ENCODE measurements at regions of chr1 and their contacts with region 1.

Region 1: DNA sequence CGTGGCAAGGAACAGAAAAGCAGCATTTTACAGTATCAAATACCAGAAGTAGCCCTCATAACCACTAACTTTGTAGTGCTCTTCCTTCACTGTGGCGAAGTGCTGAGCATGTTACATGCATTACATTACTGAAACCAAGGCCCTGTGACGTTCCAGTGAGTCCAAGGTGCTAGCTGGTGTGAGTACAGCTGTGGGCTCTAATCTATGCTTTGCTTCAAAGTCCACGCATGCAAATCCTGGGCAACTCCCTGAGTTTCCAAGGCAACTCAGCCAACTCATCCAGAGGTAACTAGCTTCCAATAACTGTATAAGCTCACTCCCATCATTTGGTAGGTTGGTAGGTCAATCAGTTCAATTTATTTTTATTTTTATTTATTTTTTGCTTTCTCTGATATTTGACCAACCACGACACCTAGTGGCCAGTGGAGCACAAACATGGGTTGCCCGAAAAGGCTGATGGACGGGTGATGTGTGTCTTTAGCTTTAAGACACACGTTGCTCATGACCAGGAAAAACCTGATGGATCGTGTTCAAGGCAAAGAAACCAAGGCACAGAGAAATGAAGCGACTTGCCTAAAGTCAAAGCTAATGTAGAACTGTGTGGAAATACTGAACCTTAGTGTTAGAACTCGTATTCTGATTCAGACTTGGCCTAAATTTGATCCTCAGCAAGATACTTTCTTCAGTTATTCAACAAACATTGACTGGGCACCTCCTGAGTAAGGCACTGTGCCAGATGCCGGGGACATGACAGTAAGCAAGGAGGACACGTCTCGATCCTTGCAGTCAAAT is 73.0 kb downstream of the GNG12 start:
- DNase-seq: peak; percentile 17 to 72 (median 59)
- ATAC-seq: peak; percentile 56
- H3K4me3 ChIP-seq: no peak overlapping the region
- H3K4me3 Mint-ChIP-seq: no peak overlapping the region
- H3K27ac ChIP-seq: no peak overlapping the region
- H3K27ac Mint-ChIP-seq: no peak overlapping the region
- H3K4me1 ChIP-seq: no peaks in the 10 kb centered on the region
- H3K4me1 Mint-ChIP-seq: no peaks in the 10 kb centered on the region
- H3K27me3 ChIP-seq: peaks cover 0 to 3% of the 10 kb centered on the region in 2 experiments
- H3K27me3 Mint-ChIP-seq: peaks cover 19% of the 10 kb centered on the region
- CTCF ChIP-seq: peak; percentile 95

Region 2: GRCh38 chr1:67274623-67275325 is 485.5 kb before region 1 on chr1:
- CTCF ChIA-PET with region 1: no interaction called
- POLR2A ChIA-PET with region 1: no interaction called
- intact Hi-C with region 1: no loop called
- DNase-seq: peak in 2 of 9 experiments; percentile 49 to 75
- ATAC-seq: peak; percentile 76
- H3K4me3 ChIP-seq: no peak overlapping the region
- H3K4me3 Mint-ChIP-seq: no peak overlapping the region
- H3K27ac ChIP-seq: no peak overlapping the region
- H3K27ac Mint-ChIP-seq: no peak overlapping the region
- H3K4me1 ChIP-seq: no peaks in the 10 kb centered on the region
- H3K4me1 Mint-ChIP-seq: peaks cover 10% of the 10 kb centered on the region
- H3K27me3 ChIP-seq: no peaks in the 10 kb centered on the region
- H3K27me3 Mint-ChIP-seq: no peaks in the 10 kb centered on the region
- CTCF ChIP-seq: no peak

Region 3: DNA sequence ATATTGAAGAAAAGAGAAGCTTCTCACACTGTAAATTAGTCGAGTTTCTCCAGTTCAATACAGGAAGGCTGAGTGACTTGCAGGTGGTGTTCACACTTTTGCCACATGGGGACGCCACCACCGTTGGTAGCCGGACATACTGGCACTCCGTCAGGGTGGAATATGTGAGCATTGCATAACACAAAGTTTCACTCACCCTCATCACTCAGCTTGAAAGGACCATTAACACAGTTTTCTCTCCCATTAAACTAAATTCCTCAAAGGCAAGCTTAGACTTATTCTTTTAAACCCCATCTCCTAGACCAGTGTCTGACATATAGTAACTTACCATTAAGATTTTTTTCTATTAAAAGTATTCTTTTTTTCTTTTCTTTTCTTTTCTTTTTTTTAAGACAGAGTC is 224.8 kb before region 1 on chr1:
- CTCF ChIA-PET with region 1: interaction called, 101 read pairs
- POLR2A ChIA-PET with region 1: no interaction called
- intact Hi-C with region 1: loop called (anchors 1 kb)
- DNase-seq: peak in 5 of 9 experiments; percentile 6 to 46 (median 20)
- ATAC-seq: no peak
- H3K4me3 ChIP-seq: no peak overlapping the region
- H3K4me3 Mint-ChIP-seq: no peak overlapping the region
- H3K27ac ChIP-seq: no peak overlapping the region
- H3K27ac Mint-ChIP-seq: no peak overlapping the region
- H3K4me1 ChIP-seq: no peaks in the 10 kb centered on the region
- H3K4me1 Mint-ChIP-seq: no peaks in the 10 kb centered on the region
- H3K27me3 ChIP-seq: no peaks in the 10 kb centered on the region
- H3K27me3 Mint-ChIP-seq: no peaks in the 10 kb centered on the region
- CTCF ChIP-seq: peak; percentile 54

Region 4: DNA sequence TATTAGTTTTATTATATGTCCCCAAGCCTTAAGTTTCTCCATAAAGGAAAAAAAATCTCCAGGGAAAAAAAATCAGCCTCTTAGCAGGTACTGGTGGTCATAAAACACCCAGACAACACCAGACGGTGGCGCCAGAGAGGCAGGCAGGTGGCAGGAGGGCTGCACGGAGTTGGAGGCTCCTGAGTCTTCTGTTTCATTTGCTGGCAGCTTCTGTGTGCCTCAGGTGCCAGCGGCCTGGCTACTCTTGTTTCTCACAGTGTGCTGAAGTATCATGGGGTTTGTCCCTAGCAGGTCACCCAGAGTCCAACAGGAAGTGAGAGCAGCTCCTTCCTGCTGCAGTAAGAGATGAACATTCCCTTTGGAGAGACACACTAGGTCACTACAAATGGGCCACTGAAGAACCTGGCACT is 198.5 kb before region 1 on chr1:
- CTCF ChIA-PET with region 1: interaction called, 402 read pairs
- POLR2A ChIA-PET with region 1: interaction called, 5 read pairs
- intact Hi-C with region 1: loop called (anchors 1 kb)
- DNase-seq: peak; percentile 64 to 87 (median 79)
- ATAC-seq: peak; percentile 80
- H3K4me3 ChIP-seq: no peak overlapping the region
- H3K4me3 Mint-ChIP-seq: no peak overlapping the region
- H3K27ac ChIP-seq: no peak overlapping the region
- H3K27ac Mint-ChIP-seq: no peak overlapping the region
- H3K4me1 ChIP-seq: no peaks in the 10 kb centered on the region
- H3K4me1 Mint-ChIP-seq: no peaks in the 10 kb centered on the region
- H3K27me3 ChIP-seq: no peaks in the 10 kb centered on the region
- H3K27me3 Mint-ChIP-seq: peaks cover 10% of the 10 kb centered on the region
- CTCF ChIP-seq: peak; percentile 88

Region 5: GRCh38 chr1:67685067-67685557 is 75.1 kb before region 1 on chr1 and contains the start of gene GADD45A:
- CTCF ChIA-PET with region 1: interaction called, 14 read pairs
- POLR2A ChIA-PET with region 1: no interaction called
- intact Hi-C with region 1: loop called in 1 of 2 experiments (anchors 1 kb)
- DNase-seq: peak; percentile 85 to 98 (median 93)
- ATAC-seq: peak; percentile 85
- H3K4me3 ChIP-seq: peak within 1 kb of the TSS; percentile 79 to 88
- H3K4me3 Mint-ChIP-seq: peak within 1 kb of the TSS; percentile 100
- H3K27ac ChIP-seq: peak within 1 kb of the TSS; percentile 61 to 66
- H3K27ac Mint-ChIP-seq: peak within 1 kb of the TSS; percentile 96
- H3K4me1 ChIP-seq: peaks cover 16% of the 10 kb centered on the region
- H3K4me1 Mint-ChIP-seq: peaks cover 25% of the 10 kb centered on the region
- H3K27me3 ChIP-seq: no peaks in the 10 kb centered on the region
- H3K27me3 Mint-ChIP-seq: no peaks in the 10 kb centered on the region
- CTCF ChIP-seq: no peak
- total RNA-seq, gene GADD45A: 194 to 196 TPM

Region 6: GRCh38 chr1:67721650-67722291 is 38.5 kb before region 1 on chr1:
- CTCF ChIA-PET with region 1: no interaction called
- POLR2A ChIA-PET with region 1: no interaction called
- intact Hi-C with region 1: no loop called
- DNase-seq: no peak
- ATAC-seq: no peak
- H3K4me3 ChIP-seq: no peak overlapping the region
- H3K4me3 Mint-ChIP-seq: no peak overlapping the region
- H3K27ac ChIP-seq: no peak overlapping the region
- H3K27ac Mint-ChIP-seq: no peak overlapping the region
- H3K4me1 ChIP-seq: no peaks in the 10 kb centered on the region
- H3K4me1 Mint-ChIP-seq: no peaks in the 10 kb centered on the region
- H3K27me3 ChIP-seq: no peaks in the 10 kb centered on the region
- H3K27me3 Mint-ChIP-seq: no peaks in the 10 kb centered on the region
- CTCF ChIP-seq: no peak

Region 7: DNA sequence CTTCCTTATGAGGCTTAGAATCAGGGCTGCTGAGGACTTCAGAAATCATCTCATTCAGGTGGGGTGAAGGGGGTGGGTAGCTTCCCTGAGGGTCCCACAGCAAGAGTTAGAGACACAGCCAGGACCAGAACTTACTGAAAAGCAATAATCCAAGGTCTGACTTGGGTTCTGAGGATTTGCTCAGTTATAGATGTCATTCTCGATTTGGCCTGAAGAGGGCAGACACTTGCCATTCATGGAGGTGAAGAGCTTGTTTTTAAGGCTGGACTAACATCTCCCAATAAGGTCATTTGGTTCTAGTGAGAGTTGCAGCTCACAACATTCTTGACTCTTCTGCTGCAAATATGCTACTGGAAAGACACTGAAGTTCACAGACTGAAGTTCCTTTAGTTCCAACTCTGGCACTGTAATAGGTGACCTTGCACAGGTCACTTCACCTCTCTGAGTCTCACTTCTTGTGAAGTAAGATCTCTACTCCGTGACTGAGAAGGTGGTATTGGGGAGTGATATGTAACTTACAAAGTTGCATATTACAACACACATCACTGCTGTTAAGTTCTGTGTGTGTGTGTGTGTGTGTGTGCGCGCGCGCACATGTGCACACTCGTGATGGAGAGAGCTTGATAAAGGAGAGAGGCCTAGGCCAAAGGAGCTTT is 360.0 kb after region 1 on chr1:
- CTCF ChIA-PET with region 1: no interaction called
- POLR2A ChIA-PET with region 1: no interaction called
- intact Hi-C with region 1: loop called (anchors 10 kb)
- DNase-seq: peak in 3 of 9 experiments; percentile 20 to 52 (median 37)
- ATAC-seq: no peak
- H3K4me3 ChIP-seq: no peak overlapping the region
- H3K4me3 Mint-ChIP-seq: no peak overlapping the region
- H3K27ac ChIP-seq: no peak overlapping the region
- H3K27ac Mint-ChIP-seq: no peak overlapping the region
- H3K4me1 ChIP-seq: no peaks in the 10 kb centered on the region
- H3K4me1 Mint-ChIP-seq: peaks cover 7% of the 10 kb centered on the region
- H3K27me3 ChIP-seq: no peaks in the 10 kb centered on the region
- H3K27me3 Mint-ChIP-seq: peaks cover 7% of the 10 kb centered on the region
- CTCF ChIP-seq: peak; percentile 48